Esophagus squamous epithelium (tissue), 5 donors: ENCODE measurements at regions of chr4 and their contacts with region 1.

Region 1: DNA sequence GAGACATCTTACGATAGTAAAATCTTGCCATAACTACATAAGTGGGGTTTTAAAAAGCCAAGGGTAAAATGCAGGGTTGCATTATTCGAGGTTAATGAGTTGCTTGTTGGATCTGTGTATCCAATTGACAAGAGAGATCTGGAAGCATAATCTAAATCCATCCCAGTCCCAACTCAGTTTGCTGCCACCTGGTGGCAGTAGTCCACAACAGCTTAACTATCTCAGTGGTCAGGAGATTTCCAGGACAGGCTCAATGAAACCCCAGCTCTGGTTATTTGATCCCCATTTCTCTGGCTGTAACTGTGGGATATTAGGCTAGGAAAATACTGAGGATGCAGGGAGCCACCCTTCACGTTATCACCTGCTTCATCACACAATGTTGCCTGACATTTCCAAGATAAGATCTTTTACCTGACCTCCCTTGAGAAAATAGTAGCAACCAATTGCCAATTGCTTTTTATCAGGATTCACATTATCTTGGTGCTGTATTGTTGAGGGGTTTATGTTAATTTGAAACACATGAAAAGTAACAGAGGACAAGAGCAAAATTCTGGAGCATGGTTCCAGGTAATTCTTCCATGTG is 88.2 kb upstream of the TNIP3 start:
- DNase-seq: no peak
- H3K4me3 ChIP-seq: no peak overlapping the region
- H3K27ac ChIP-seq: no peak overlapping the region
- H3K4me1 ChIP-seq: peaks cover 0 to 12% (median 7%) of the 10 kb centered on the region in 3 donors
- H3K27me3 ChIP-seq: no peaks in the 10 kb centered on the region
- CTCF ChIP-seq: peak; percentile 65 to 84 (median 70)
- POLR2A ChIP-seq: no peak

Region 2: DNA sequence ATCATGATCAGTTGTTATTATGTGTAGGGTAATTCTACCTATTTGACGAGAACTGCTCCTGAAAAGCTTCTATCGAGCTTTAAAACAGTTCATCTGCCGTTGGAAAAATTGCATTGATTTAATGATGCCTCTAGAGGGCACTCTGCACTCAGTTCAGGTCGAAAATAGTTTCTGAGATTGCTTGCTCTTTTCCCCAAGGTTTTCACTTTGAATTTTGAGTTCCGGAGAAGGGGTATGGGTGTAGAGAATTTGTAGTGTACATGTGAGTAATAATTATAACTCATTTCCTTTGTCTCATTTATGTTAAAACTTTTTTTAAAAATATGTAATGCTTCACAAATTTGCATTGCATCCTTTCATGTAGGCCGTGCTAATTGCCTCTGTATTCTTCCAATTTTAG is 59.8 kb before region 1 on chr4:
- intact Hi-C with region 1: loop called (anchors 5 kb)
- DNase-seq: no peak
- H3K4me3 ChIP-seq: peak overlapping the region in 1 of 4 donors; percentile 29
- H3K27ac ChIP-seq: no peak overlapping the region
- H3K4me1 ChIP-seq: peaks cover 0 to 3% (median 0%) of the 10 kb centered on the region in 3 donors
- H3K27me3 ChIP-seq: no peaks in the 10 kb centered on the region
- CTCF ChIP-seq: peak in 5 of 6 experiments; percentile 21 to 73 (median 60)
- POLR2A ChIP-seq: no peak

Region 3: GRCh38 chr4:121582296-121582695 is 330.0 kb after region 1 on chr4:
- intact Hi-C with region 1: no loop called
- DNase-seq: no peak
- H3K4me3 ChIP-seq: no peak overlapping the region
- H3K27ac ChIP-seq: no peak overlapping the region
- H3K4me1 ChIP-seq: no peaks in the 10 kb centered on the region
- H3K27me3 ChIP-seq: no peaks in the 10 kb centered on the region
- CTCF ChIP-seq: no peak
- POLR2A ChIP-seq: no peak